ENCODE measurements at regions of chr9 and their contacts with region 1.

Region 1: GRCh38 chr9:112012026-112012902 is 115.7 kb downstream of the UGCG start:
- DNase-seq: peak; percentile 91
- H3K4me3 ChIP-seq: no peak overlapping the region
- H3K27ac ChIP-seq: peak overlapping the region; percentile 98
- H3K4me1 ChIP-seq: peaks cover 24% of the 10 kb centered on the region
- H3K27me3 ChIP-seq: no peaks in the 10 kb centered on the region
- CTCF ChIP-seq: no peak

Region 2: DNA sequence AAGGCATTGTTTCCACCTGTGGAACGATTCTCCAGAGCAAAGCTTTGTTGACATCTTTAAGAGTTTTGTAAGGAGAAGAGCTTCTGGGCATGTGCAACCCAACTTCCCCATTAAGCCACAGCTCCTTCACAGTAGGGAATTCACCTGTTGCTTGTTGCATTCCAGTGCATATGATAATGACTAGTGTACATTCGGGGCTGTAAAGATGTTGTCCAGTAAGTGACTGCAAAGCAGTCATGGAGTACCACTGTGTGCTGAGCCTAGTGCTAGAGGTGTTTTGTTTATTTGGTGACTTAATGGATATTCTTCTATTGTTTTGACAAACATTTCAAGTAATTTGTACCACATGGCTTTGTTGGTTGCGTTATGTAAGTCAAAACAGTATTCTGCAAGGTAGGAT is 102.8 kb before region 1 on chr9:
- CTCF ChIA-PET with region 1: no interaction called
- dilution Hi-C with region 1: no loop called
- in situ Hi-C with region 1: no loop called
- intact Hi-C with region 1: no loop called
- DNase-seq: no peak
- H3K4me3 ChIP-seq: no peak overlapping the region
- H3K27ac ChIP-seq: no peak overlapping the region
- H3K4me1 ChIP-seq: peaks cover 9% of the 10 kb centered on the region
- H3K27me3 ChIP-seq: no peaks in the 10 kb centered on the region
- CTCF ChIP-seq: no peak

Region 3: GRCh38 chr9:111965566-111966019 is 46.7 kb before region 1 on chr9:
- CTCF ChIA-PET with region 1: no interaction called
- dilution Hi-C with region 1: no loop called
- in situ Hi-C with region 1: loop called in 1 of 2 experiments (anchors 10 kb)
- intact Hi-C with region 1: loop called (anchors 2 kb)
- DNase-seq: peak; percentile 99
- H3K4me3 ChIP-seq: no peak overlapping the region
- H3K27ac ChIP-seq: peak overlapping the region; percentile 93
- H3K4me1 ChIP-seq: peaks cover 35% of the 10 kb centered on the region
- H3K27me3 ChIP-seq: no peaks in the 10 kb centered on the region
- CTCF ChIP-seq: peak; percentile 11 to 22

Region 4: DNA sequence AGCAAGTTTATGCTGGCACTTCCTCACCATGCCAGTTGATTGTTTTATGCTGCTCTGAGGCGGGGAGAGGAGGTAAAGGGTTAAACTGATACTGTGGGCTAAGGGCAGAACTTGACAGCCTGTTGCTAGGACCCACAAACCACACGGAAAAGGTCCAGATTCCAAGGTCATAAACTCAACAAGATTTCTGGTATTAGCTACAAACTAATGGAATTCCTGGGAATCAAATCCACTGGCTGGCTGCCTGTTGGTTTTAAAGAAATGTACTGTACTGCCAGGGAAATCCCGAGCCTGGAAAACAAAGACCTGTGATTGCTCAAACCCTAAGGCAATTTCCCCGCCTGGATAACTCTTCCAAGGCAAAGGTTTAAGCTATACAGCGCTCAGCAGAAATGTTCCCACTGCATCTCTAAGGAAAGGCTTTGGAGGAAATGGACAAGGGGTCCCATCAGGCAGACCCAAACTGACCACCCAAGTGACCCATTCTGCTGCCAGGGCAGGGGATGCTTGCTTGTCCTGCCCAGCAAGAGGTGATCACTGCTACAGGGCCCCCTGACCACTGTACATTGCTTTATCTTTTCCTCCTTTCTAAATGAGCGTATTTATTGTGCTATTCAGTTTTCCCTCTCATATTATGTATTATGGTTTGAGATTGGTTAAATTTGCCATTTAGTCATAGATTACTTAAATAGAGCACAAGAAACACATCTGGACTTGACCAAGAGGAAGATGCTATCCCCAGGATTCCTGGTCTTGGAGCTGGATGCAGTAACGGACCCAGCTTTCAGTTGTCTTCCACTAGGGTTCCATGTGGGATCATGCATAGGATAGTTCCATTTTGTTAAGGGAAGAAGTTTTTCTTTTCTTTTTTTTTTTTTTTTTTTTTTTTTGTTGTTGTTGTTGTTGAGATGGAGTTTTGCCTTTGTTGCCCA is 38.5 kb after region 1 on chr9:
- CTCF ChIA-PET with region 1: no interaction called
- dilution Hi-C with region 1: loop called (anchors 5 kb)
- in situ Hi-C with region 1: no loop called
- intact Hi-C with region 1: no loop called
- DNase-seq: peak; percentile 77
- H3K4me3 ChIP-seq: no peak overlapping the region
- H3K27ac ChIP-seq: peak overlapping the region; percentile 46
- H3K4me1 ChIP-seq: peaks cover 41% of the 10 kb centered on the region
- H3K27me3 ChIP-seq: no peaks in the 10 kb centered on the region
- CTCF ChIP-seq: no peak

Region 5: DNA sequence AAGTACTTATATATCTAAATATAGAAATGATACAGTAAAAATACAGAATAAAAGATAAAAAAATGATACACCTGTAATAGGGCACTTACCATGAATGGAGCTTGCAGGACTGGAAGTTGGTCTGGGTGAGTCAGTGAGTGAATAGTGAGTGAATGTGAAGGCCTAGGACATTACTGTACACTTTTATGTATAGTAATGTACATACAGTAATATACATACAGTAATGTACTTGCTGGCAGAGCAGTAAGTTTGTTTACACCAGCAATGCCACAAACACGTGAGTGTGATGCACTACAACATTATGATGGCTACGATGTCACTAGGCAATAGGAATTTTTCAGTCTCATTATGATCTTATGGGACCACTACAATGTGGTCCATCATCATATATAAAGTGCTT is 128.7 kb after region 1 on chr9:
- CTCF ChIA-PET with region 1: no interaction called
- dilution Hi-C with region 1: no loop called
- in situ Hi-C with region 1: no loop called
- intact Hi-C with region 1: no loop called
- DNase-seq: peak; percentile 11
- H3K4me3 ChIP-seq: no peak overlapping the region
- H3K27ac ChIP-seq: no peak overlapping the region
- H3K4me1 ChIP-seq: peaks cover 13% of the 10 kb centered on the region
- H3K27me3 ChIP-seq: no peaks in the 10 kb centered on the region
- CTCF ChIP-seq: no peak

Region 6: GRCh38 chr9:112665347-112665746 is 653.1 kb after region 1 on chr9:
- CTCF ChIA-PET with region 1: no interaction called
- dilution Hi-C with region 1: no loop called
- in situ Hi-C with region 1: no loop called
- intact Hi-C with region 1: no loop called
- DNase-seq: peak; percentile 11
- H3K4me3 ChIP-seq: no peak overlapping the region
- H3K27ac ChIP-seq: no peak overlapping the region
- H3K4me1 ChIP-seq: no peaks in the 10 kb centered on the region
- H3K27me3 ChIP-seq: no peaks in the 10 kb centered on the region
- CTCF ChIP-seq: peak; percentile 38 to 55